Activated B cell treated with CpG ODN at 0.5 μM for 24 hours (primary cell): ENCODE measurements at regions of chr7 and their contacts with region 1.

Region 1: DNA sequence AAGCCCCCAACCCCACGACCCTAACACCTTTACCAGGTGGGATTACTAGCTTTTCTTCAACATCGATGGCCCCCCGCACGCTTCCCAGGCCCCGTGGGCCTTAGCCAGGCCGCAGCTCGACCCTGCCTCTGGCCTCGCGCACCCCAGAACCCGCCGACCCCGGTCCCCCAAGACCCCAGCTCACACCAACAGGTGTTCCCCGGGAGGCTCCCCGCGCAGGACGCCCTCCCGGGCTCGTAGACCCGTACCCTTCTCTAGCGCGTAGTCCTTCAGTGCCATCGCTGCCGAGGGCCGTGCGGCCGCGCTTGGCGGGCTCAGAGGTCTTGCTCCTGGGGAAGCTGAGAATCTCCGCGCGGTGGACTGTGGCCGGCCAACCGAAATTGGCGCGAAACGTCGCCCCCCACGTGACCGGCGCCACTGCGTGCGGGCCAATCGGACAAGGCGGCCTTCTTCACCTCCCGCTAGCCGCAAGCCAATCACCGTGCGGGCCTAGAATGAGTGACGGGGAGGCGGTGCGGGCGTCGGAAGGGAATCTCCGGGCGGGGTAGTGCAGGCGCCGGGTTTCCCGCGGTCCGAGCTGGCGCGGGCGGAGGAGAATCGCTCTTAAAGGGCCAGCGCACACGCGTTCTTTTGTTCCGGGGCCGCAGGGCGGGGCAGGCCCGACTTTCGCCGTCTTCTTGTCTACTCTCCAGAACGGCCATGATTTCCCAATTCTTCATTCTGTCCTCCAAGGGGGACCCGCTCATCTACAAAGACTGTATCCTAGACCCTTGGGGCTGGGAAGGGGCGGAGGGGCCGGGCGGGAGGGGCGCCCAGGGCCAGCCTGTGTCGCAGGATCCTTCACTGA is at the starts of genes AP4M1 and MCM7:
- DNase-seq: peak; percentile 92
- ATAC-seq: peak; percentile 86
- H3K4me3 Mint-ChIP-seq: peak within 1 kb of the TSS; percentile 92
- H3K27ac Mint-ChIP-seq: peak within 1 kb of the TSS; percentile 87
- H3K4me1 Mint-ChIP-seq: peaks cover 32% of the 10 kb centered on the region
- H3K27me3 Mint-ChIP-seq: no peaks in the 10 kb centered on the region
- CTCF ChIP-seq: no peak
- total RNA-seq, gene AP4M1: 11.1 and 12.5 TPM in 2 replicates
- total RNA-seq, gene MCM7: 99.7 and 104 TPM in 2 replicates

Region 2: DNA sequence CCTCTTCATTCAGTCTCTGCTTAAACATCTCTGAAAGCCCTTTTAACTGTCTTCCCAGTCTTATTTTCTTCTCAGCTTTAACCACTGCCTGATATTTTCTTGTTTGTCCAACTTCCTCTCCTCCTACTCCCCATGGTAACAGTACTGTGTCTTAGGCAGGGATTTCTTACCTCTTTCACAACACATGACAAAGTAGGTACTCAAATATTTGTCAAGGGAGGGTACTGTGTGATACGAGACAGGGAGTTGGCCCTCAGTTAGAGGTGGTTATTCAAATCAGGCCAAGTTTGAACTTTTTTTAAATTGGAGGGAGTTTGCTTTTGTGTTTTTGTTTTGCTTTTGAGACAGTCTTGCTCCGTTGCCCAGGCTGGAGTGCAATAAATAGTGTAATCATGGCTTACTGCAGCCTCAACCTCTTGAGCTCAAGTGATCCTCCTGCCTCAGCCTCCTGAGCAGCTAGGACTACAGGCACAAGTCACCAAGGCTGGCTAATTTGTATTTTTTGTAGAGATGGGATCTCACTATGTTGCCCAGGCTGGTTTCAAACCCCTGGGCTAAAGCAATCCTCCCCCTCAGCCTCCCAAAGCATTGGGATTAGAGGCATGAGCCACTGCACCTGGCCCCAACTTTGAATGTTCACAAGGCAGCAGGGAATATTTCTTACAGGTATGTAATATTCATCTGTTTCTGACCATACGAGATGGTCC is 890.8 kb before region 1 on chr7:
- CTCF ChIA-PET with region 1: no interaction called
- POLR2A ChIA-PET with region 1: no interaction called
- intact Hi-C with region 1: no loop called
- DNase-seq: no peak
- ATAC-seq: no peak
- H3K4me3 Mint-ChIP-seq: no peak overlapping the region
- H3K27ac Mint-ChIP-seq: no peak overlapping the region
- H3K4me1 Mint-ChIP-seq: no peaks in the 10 kb centered on the region
- H3K27me3 Mint-ChIP-seq: peaks cover 8% of the 10 kb centered on the region
- CTCF ChIP-seq: no peak

Region 3: GRCh38 chr7:99876491-99876890 is 224.7 kb before region 1 on chr7:
- CTCF ChIA-PET with region 1: no interaction called
- POLR2A ChIA-PET with region 1: no interaction called
- intact Hi-C with region 1: no loop called
- DNase-seq: no peak
- ATAC-seq: no peak
- H3K4me3 Mint-ChIP-seq: no peak overlapping the region
- H3K27ac Mint-ChIP-seq: no peak overlapping the region
- H3K4me1 Mint-ChIP-seq: no peaks in the 10 kb centered on the region
- H3K27me3 Mint-ChIP-seq: no peaks in the 10 kb centered on the region
- CTCF ChIP-seq: no peak

Region 4: GRCh38 chr7:100049441-100050311 is 51.6 kb before region 1 on chr7 and contains the start of gene ZSCAN21:
- CTCF ChIA-PET with region 1: no interaction called
- POLR2A ChIA-PET with region 1: interaction called, 17 read pairs
- intact Hi-C with region 1: loop called (anchors 1 kb)
- DNase-seq: peak; percentile 87
- ATAC-seq: peak; percentile 90
- H3K4me3 Mint-ChIP-seq: peak within 1 kb of the TSS; percentile 95
- H3K27ac Mint-ChIP-seq: peak within 1 kb of the TSS; percentile 94
- H3K4me1 Mint-ChIP-seq: peaks cover 16% of the 10 kb centered on the region
- H3K27me3 Mint-ChIP-seq: no peaks in the 10 kb centered on the region
- CTCF ChIP-seq: no peak
- total RNA-seq, gene ZSCAN21: 10.6 and 11.3 TPM in 2 replicates

Region 5: DNA sequence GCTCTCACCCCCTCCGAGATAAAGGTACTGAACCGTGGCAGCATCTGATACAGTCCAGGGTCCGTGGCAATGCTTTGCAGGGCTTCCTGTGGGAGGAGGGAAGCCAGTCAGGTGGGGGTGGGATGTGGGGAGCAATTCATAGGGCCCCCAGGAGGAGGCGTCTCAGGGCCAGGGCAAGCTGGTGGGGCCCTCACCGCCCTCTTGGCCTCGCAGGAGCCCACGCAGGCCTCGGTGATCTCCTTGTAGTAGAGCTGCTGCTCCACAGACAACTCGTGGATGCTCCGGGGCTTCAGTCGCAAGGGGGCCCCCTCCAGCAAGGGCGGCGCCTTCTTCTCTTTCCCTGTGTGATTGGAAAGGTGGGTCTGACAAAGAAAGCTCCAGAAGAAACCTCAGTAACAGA is 10.7 kb after region 1 on chr7:
- CTCF ChIA-PET with region 1: no interaction called
- POLR2A ChIA-PET with region 1: interaction called, 13 read pairs
- intact Hi-C with region 1: no loop called
- DNase-seq: no peak
- ATAC-seq: no peak
- H3K4me3 Mint-ChIP-seq: no peak overlapping the region
- H3K27ac Mint-ChIP-seq: no peak overlapping the region
- H3K4me1 Mint-ChIP-seq: peaks cover 3% of the 10 kb centered on the region
- H3K27me3 Mint-ChIP-seq: no peaks in the 10 kb centered on the region
- CTCF ChIP-seq: no peak

Region 6: GRCh38 chr7:100126931-100127865 is 26.0 kb after region 1 on chr7 and contains the start of gene MBLAC1:
- CTCF ChIA-PET with region 1: interaction called, 4 read pairs
- POLR2A ChIA-PET with region 1: interaction called, 49 read pairs
- intact Hi-C with region 1: loop called (anchors 1 kb)
- DNase-seq: peak; percentile 81
- ATAC-seq: peak; percentile 85
- H3K4me3 Mint-ChIP-seq: peak within 1 kb of the TSS; percentile 100
- H3K27ac Mint-ChIP-seq: peak within 1 kb of the TSS; percentile 100
- H3K4me1 Mint-ChIP-seq: peaks cover 41% of the 10 kb centered on the region
- H3K27me3 Mint-ChIP-seq: no peaks in the 10 kb centered on the region
- CTCF ChIP-seq: no peak
- total RNA-seq, gene MBLAC1: 1.9 and 2.2 TPM in 2 replicates

Region 7: GRCh38 chr7:100369105-100369504 is 267.9 kb after region 1 on chr7:
- CTCF ChIA-PET with region 1: no interaction called
- POLR2A ChIA-PET with region 1: interaction called, 12 read pairs
- intact Hi-C with region 1: no loop called
- DNase-seq: peak; percentile 69
- ATAC-seq: peak; percentile 80
- H3K4me3 Mint-ChIP-seq: peak overlapping the region; percentile 44
- H3K27ac Mint-ChIP-seq: peak overlapping the region; percentile 91
- H3K4me1 Mint-ChIP-seq: peaks cover 92% of the 10 kb centered on the region
- H3K27me3 Mint-ChIP-seq: no peaks in the 10 kb centered on the region
- CTCF ChIP-seq: no peak